WTC11 (cell line): ENCODE measurements at regions of chr11 and their contacts with region 1.

Region 1: GRCh38 chr11:67353317-67354074 is at the start of gene POLD4:
- DNase-seq: peak; percentile 99
- ATAC-seq: peak; percentile 88
- H3K4me3 Mint-ChIP-seq: peak within 1 kb of the TSS; percentile 91
- H3K27ac Mint-ChIP-seq: peak within 1 kb of the TSS; percentile 90
- H3K4me1 Mint-ChIP-seq: peaks cover 34% of the 10 kb centered on the region
- H3K27me3 Mint-ChIP-seq: peaks cover 10% of the 10 kb centered on the region
- CTCF ChIP-seq: no peak
- total RNA-seq, gene POLD4: 30.3 to 38.3 TPM (median 37.7 TPM) in 3 replicates

Region 2: DNA sequence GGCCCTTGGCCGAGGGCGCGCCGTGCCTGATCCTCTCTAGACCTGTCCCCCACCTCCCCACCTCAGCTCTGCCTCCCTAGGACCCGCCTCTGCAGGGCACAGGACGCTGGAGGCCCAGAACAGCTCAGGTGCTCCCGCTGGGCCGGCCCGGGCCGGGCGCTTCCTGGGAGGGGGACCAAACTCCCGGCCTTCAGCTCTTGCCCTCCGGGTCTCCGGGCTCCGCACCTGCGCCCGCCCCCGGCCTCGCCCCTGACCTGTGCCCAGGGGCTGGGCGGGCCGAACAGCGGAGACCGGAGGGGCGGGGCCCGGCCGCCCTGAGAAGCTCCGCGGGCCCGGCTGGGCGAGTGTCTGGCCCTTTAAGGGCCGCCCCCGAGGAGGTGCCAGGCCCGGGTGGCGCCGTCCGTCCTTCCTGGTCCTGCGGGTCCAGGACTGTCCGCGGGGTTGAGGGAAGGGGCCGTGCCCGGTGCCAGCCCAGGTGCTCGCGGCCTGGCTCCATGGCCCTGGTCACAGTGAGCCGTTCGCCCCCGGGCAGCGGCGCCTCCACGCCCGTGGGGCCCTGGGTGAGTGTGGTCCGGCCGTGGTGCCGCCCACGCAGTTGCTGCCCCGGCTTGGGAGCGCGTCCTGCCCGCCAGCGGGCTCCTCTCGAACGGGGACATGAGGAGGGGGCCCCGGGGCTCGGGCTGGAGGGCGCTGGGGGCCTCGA is 50.2 kb before region 1 on chr11 and contains the start of gene SSH3:
- CTCF ChIA-PET with region 1: interaction called, 13 read pairs
- POLR2A ChIA-PET with region 1: no interaction called
- DNase-seq: peak; percentile 78
- ATAC-seq: peak; percentile 82
- H3K4me3 Mint-ChIP-seq: peak within 1 kb of the TSS; percentile 74
- H3K27ac Mint-ChIP-seq: peak within 1 kb of the TSS; percentile 57
- H3K4me1 Mint-ChIP-seq: peaks cover 11% of the 10 kb centered on the region
- H3K27me3 Mint-ChIP-seq: peaks cover 4% of the 10 kb centered on the region; the same call in 1 of the 2 replicates
- CTCF ChIP-seq: no peak
- total RNA-seq, gene SSH3: 34.8 to 43.4 TPM (median 42.3 TPM) in 3 replicates

Region 3: DNA sequence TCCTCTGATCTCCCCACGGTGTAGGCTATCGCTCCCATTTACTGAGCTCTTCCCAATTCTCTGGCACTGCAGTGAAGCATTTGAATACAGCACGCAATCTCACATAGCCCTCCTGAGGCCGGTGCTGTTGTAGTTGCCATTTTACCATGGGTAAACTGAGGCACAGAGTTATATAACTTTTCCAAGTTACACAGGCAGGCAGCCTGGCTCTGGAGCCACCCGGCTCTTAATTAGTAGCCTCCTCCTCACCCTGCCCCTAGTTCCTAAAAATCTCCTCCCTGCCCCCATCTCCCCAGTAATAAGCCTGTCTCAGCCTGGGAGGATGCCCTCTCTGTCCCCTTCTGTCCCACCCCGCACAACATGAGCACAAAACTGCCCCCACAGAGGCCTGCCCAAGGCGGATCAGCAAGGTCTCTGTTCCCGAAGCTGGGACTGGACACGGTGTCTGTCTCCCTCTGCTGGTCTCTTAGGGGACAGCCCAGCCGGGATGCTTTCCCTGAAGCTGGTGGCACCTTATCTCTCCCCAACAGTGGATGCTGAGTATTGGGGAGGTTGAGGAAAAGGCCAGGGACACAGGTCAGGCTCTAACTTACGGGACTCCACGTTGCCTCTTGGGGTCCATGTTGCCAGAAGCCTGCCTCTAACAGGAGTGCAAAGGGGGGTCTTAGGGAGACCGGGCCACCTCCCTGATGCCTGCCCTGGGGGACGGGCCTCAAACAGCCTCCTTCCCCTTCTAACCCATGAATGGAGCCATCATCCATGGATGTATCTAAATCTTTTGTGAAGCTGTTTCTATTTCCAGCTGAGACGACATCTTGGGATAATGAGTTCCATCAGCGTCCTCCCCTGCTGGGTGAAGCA is 29.0 kb after region 1 on chr11:
- CTCF ChIA-PET with region 1: interaction called, 842 read pairs
- POLR2A ChIA-PET with region 1: interaction called, 8 read pairs
- DNase-seq: peak; percentile 90
- ATAC-seq: peak; percentile 85
- H3K4me3 Mint-ChIP-seq: no peak overlapping the region
- H3K27ac Mint-ChIP-seq: no peak overlapping the region; the same call in 1 of the 2 replicates
- H3K4me1 Mint-ChIP-seq: peaks cover 17% of the 10 kb centered on the region
- H3K27me3 Mint-ChIP-seq: peaks cover 52% of the 10 kb centered on the region
- CTCF ChIP-seq: peak; percentile 90

Region 4: GRCh38 chr11:67391304-67392132 is 38.0 kb after region 1 on chr11 and contains the start of gene RAD9A:
- CTCF ChIA-PET with region 1: interaction called, 842 read pairs
- POLR2A ChIA-PET with region 1: no interaction called
- DNase-seq: peak; percentile 93
- ATAC-seq: peak; percentile 52
- H3K4me3 Mint-ChIP-seq: peak within 1 kb of the TSS; percentile 75
- H3K27ac Mint-ChIP-seq: peak within 1 kb of the TSS; percentile 85
- H3K4me1 Mint-ChIP-seq: peaks cover 35% of the 10 kb centered on the region
- H3K27me3 Mint-ChIP-seq: no peaks in the 10 kb centered on the region
- CTCF ChIP-seq: no peak
- total RNA-seq, gene RAD9A: 25.7 to 45.5 TPM (median 26.7 TPM) in 3 replicates

Region 5: DNA sequence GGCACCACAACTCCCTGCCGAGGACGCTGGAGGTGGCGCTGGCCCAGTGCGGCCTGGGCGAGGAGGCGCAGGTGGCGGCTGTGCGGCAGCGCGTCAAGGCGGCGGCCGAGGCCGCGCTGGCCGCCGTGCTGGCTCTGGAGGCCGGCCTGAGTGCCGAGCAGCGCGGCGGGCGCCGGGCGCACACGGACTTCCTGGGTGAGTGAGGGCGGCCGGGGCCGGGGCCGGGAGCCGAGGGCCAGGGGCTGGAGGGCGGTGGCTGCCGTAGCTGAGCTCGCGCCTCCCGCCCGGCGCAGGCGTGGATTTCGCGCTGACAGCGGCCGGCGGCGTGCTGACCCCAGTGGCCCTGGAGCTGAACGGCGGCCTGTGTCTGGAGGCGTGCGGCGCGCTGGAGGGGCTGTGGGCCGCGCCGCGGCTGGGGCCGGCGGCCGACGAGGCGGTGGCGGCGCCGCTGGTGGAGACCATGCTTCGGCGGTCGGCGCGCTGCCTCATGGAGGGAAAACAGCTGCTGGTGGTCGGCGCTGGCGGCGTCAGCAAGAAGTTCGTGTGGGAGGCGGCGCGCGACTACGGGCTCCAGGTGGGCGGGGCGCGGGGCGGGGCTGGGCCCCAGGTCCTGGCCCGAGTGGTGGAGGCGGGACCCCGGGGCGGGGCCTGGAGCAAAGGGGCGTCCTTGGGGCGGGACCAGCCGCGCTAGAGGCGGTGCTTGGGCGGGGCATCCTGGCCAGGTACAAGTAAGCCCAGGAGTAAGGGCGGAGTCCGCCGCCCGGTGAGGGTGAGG is 67.3 kb after region 1 on chr11:
- CTCF ChIA-PET with region 1: interaction called, 13 read pairs
- POLR2A ChIA-PET with region 1: no interaction called
- DNase-seq: peak; percentile 99
- ATAC-seq: peak; percentile 96
- H3K4me3 Mint-ChIP-seq: peak overlapping the region; percentile 63
- H3K27ac Mint-ChIP-seq: peak overlapping the region; percentile 77
- H3K4me1 Mint-ChIP-seq: peaks cover 19% of the 10 kb centered on the region
- H3K27me3 Mint-ChIP-seq: peaks cover 6% of the 10 kb centered on the region; the same call in 1 of the 2 replicates
- CTCF ChIP-seq: no peak

Region 6: GRCh38 chr11:67468835-67469811 is 115.6 kb after region 1 on chr11 and contains the start of gene TMEM134:
- CTCF ChIA-PET with region 1: interaction called, 10 read pairs
- POLR2A ChIA-PET with region 1: interaction called, 3 read pairs
- DNase-seq: peak; percentile 92
- ATAC-seq: peak; percentile 77
- H3K4me3 Mint-ChIP-seq: peak within 1 kb of the TSS; percentile 87
- H3K27ac Mint-ChIP-seq: 0 out of 2 replicates have a peak within 1 kb of the TSS, but pooled peaks have one; percentile 42
- H3K4me1 Mint-ChIP-seq: peaks cover 23% of the 10 kb centered on the region
- H3K27me3 Mint-ChIP-seq: peaks cover 13% of the 10 kb centered on the region
- CTCF ChIP-seq: no peak
- total RNA-seq, gene TMEM134: 55.6 to 61.1 TPM (median 59.6 TPM) in 3 replicates